ENCODE measurements at regions of chr3 and their contacts with region 1.

Region 1: GRCh38 chr3:54951405-54951804 is 23.5 kb upstream of the LRTM1 start:
- DNase-seq: peak; percentile 38
- H3K4me3 ChIP-seq: no peak overlapping the region
- H3K27ac ChIP-seq: no peak overlapping the region
- H3K4me1 ChIP-seq: no peaks in the 10 kb centered on the region
- H3K27me3 ChIP-seq: no peaks in the 10 kb centered on the region
- CTCF ChIP-seq: peak in 2 of 4 experiments; percentile 44 to 52
- POLR2A ChIP-seq: no peak

Region 2: DNA sequence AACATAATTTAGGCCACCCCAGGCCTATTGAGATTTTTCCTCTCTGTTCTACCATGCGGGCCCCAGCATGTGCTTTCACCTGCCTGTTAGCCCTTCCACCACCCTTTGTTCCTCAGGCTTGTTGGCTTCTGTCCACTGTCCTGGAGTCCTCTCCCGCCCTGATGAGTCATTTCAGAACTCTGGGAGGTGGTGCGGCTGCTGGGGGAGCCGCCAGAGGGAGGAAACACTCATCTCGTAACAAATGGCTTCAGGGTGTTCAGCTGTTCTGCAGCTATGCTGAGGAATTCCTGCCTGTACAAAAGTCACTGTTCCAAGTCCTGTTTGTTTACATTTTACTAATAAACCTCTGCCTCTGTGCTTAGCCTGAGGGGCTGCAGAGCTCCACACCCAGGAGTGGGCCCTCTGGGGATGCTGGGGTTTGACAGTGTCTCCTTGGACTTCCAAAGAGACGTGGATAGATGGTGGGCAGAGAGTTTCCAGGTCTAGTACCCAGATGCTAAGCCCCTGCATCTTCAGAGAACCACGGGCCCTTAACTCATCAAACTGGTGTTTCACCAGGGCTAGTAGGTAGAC is 59.8 kb before region 1 on chr3:
- intact Hi-C with region 1: loop called (anchors 5 kb)
- DNase-seq: peak; percentile 92
- H3K4me3 ChIP-seq: no peak overlapping the region
- H3K27ac ChIP-seq: peak overlapping the region; percentile 45 to 48
- H3K4me1 ChIP-seq: peaks cover 3% of the 10 kb centered on the region
- H3K27me3 ChIP-seq: no peaks in the 10 kb centered on the region
- CTCF ChIP-seq: peak in 3 of 4 experiments; percentile 20 to 71 (median 64)
- POLR2A ChIP-seq: no peak

Region 3: GRCh38 chr3:54983271-54984099 is 32.1 kb after region 1 on chr3:
- intact Hi-C with region 1: no loop called
- DNase-seq: no peak
- H3K4me3 ChIP-seq: no peak overlapping the region
- H3K27ac ChIP-seq: no peak overlapping the region
- H3K4me1 ChIP-seq: no peaks in the 10 kb centered on the region
- H3K27me3 ChIP-seq: no peaks in the 10 kb centered on the region
- CTCF ChIP-seq: no peak
- POLR2A ChIP-seq: no peak

Region 4: DNA sequence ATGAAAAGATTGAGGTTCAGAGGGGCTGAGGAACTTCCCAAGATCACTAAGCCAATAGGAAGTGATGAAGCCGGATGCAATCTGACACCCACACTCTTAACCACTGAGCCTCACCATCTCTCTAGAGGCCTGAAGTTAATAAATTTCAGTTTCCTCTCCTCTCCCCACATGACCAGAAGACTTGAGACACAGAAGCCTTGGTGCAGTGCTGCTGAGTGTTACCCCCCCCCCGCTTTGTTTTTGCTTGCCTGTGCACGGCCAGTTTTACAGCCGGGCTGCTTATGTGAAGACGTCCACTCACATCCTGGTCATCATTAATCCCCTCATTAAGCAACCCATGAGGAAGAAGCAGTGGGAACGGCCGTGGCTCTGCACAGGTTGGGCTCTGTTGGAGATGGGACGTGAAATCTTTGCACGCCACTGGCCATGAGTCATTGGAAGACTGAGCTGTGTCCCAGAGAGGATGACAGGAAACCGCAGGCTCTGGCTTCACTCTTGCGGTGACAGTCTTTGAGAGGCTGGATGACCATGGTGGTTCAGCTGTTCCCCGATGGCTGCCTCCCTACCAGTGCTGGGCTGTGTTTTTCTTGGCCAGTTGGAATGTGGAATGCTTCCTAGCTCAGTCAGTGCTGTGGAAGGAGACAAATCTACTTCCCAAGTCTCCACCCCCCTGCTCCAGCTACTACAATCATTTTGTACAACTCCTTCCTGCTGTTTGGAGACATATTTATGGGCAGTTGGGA is 209.0 kb after region 1 on chr3:
- intact Hi-C with region 1: loop called (anchors 10 kb)
- DNase-seq: no peak
- H3K4me3 ChIP-seq: no peak overlapping the region
- H3K27ac ChIP-seq: no peak overlapping the region
- H3K4me1 ChIP-seq: no peaks in the 10 kb centered on the region
- H3K27me3 ChIP-seq: no peaks in the 10 kb centered on the region
- CTCF ChIP-seq: no peak
- POLR2A ChIP-seq: no peak

Region 5: DNA sequence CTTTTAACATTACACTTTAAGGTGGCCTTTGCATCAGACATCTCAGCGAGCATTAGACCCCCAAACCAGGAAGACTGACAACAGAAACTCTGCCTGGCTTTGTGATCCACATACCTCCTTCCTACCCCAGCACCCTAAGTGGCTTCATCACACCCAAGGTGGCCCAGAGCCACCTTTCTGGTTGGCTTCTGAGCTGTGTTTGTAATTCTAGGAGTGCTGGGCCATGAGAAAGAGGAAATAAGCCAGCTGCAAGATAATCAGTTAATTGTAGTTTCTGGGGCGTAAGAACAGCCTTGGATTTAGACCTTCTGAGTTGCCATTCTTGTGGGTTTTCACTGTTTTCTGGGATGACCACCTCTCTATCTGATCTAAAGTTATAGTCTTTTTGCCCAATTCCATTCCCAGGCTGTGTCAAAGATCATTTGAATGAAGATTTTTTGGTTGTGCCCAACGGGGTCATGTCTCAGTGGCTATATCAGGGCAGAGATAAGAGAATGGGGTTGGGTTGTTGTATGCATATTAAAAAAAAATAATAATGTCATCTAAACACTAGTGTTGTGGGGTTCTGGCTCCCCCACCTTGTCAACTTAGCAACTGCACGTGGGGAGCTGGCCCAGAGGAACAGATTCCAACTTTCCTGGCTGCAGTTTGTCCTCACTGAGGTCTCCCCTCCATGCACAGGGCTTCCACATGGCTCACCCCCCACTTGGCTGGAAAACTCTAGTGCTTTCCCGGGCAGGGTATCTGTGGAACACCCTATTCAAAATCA is 770.5 kb after region 1 on chr3:
- intact Hi-C with region 1: loop called (anchors 10 kb)
- DNase-seq: no peak
- H3K4me3 ChIP-seq: no peak overlapping the region
- H3K27ac ChIP-seq: no peak overlapping the region
- H3K4me1 ChIP-seq: no peaks in the 10 kb centered on the region
- H3K27me3 ChIP-seq: no peaks in the 10 kb centered on the region
- CTCF ChIP-seq: peak in 2 of 4 experiments; percentile 40 to 44
- POLR2A ChIP-seq: no peak

Measured in prostate gland (tissue), 2 donors.